ENCODE measurements at regions of chr5 and their contacts with region 1.

Region 1: GRCh38 chr5:10452768-10453331 is 11.2 kb downstream of the ROPN1L start:
- DNase-seq: peak; percentile 65
- H3K4me3 ChIP-seq: no peak overlapping the region
- CTCF ChIP-seq: peak; percentile 68

Region 2: DNA sequence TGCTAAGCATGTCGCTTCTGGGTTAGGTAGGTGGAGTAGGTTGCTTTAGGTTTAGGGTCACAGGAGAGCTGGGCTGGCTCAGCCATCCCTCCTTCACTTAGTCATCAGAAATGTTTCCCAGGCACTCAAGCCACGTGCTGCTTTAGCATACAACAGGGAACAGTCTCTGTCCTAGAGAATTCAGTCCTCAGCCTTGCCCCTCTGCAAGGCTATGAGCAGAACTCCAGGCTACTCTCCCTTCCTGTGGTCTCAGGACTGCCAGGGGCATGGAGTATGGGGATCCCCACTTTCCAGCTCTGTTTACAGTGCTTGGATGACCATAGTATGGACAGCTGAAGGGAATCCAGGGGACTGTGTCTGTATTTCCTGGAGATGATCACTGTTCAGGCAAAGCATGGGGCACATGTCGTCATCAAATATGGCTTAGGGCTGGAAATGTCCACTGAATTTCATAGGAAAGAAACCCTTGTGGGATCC is 103.5 kb after region 1 on chr5:
- CTCF ChIA-PET with region 1: interaction called, 24 read pairs
- POLR2A ChIA-PET with region 1: no interaction called
- DNase-seq: no peak
- H3K4me3 ChIP-seq: no peak overlapping the region
- CTCF ChIP-seq: no peak

Region 3: DNA sequence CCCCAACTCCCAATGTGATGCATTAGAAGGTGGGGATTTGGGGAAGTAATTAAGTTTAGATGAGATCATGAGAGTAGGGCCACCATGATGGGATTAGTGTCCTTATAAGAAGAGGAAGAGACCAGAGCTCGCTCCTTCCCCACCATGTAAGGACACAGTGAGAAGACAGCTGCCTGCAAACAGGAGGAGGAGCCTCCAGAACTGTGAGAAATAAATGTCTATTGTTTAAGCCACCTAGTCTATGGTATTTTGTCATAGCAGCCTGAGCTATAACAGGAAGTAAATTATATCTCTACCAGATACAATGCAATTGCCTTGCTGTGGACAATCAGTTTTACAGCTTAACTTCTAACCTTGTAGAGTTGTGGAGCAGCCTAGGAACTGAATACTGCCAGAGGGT is 169.0 kb after region 1 on chr5:
- CTCF ChIA-PET with region 1: interaction called, 256 read pairs
- POLR2A ChIA-PET with region 1: no interaction called
- DNase-seq: no peak
- H3K4me3 ChIP-seq: no peak overlapping the region
- CTCF ChIP-seq: no peak

Region 4: GRCh38 chr5:10635257-10635866 is 182.5 kb after region 1 on chr5:
- CTCF ChIA-PET with region 1: interaction called, 256 read pairs
- POLR2A ChIA-PET with region 1: no interaction called
- DNase-seq: no peak
- H3K4me3 ChIP-seq: no peak overlapping the region
- CTCF ChIP-seq: no peak

Region 5: GRCh38 chr5:10701567-10702039 is 248.8 kb after region 1 on chr5:
- CTCF ChIA-PET with region 1: interaction called, 15 read pairs
- POLR2A ChIA-PET with region 1: no interaction called
- DNase-seq: no peak
- H3K4me3 ChIP-seq: no peak overlapping the region
- CTCF ChIP-seq: peak; percentile 55

Measured in AG04449 (cell line).